HEK293T (cell line): ENCODE measurements at regions of chr10 and their contacts with region 1.

Region 1: GRCh38 chr10:32378363-32379317 is 31.7 kb upstream of the EPC1 start:
- DNase-seq: peak; percentile 71

Region 2: DNA sequence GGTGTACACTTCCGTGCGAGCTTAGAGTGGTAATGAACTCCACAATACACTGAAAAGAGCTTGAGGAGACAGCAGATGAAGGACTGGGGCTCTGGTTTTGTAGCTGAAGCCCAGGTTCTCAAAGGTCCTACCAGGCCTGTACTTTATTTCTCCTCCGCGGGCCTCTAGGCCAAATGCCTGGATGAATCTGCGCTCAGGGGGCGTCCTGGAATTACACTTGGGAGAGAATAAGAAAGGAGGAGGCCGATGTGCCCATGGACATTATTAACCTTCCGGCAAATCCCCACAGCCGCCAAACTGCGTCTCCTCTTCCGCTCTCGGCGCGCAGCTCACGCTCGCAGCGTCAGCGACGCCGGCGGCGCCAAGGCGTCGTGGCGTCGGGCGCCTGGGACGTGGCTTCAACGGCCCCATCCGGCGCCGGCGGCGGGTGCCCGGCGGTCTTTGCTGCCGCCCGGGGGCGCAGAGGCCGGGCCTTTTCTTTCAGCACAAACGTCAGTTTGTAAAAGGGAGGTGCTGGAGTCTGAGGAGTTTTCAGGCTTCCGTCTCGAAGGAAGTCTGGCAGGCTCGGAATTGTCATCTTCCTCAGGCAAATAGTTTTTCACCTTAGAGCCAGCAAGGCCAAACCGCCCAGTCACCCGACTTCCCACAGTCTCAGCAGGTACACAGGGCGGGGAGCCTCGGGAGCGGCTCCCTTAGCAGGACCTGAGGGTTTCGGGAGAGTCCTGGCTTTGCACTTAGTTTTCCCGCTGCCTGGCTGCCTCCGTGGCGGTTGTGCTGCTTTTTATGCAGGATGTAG is 67.3 kb after region 1 on chr10 and contains the start of gene CCDC7:
- CTCF ChIA-PET with region 1: no interaction called
- POLR2A ChIA-PET with region 1: interaction called, 24 read pairs
- DNase-seq: peak; percentile 71